ENCODE measurements at regions of chr15 and their contacts with region 1.

Region 1: GRCh38 chr15:40481341-40482074 is 10.7 kb downstream of the CHST14 start:
- DNase-seq: no peak
- H3K4me3 Mint-ChIP-seq: no peak overlapping the region
- H3K27ac Mint-ChIP-seq: no peak overlapping the region
- H3K4me1 Mint-ChIP-seq: no peaks in the 10 kb centered on the region
- H3K27me3 Mint-ChIP-seq: peaks cover 36% of the 10 kb centered on the region

Region 2: DNA sequence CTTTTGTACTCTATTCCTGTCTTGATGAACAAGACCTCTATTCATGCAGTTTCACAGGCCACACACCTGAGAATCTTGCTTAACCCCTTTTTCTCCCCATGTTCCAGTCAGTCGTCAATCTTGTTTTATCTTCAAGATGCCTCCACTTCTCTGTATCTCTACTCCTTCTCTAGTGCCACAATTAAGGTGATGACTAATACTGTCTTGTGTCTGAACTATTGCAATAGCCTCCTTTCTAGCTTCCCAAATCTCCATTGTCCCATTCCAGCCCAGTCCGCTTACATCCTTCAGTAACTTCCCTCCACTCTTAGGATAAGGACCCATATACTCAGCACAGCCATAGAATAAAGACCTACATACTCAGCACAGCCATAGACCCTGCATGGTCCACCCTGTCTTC is 14.0 kb after region 1 on chr15:
- intact Hi-C with region 1: loop called (anchors 1 kb)
- DNase-seq: no peak
- H3K4me3 Mint-ChIP-seq: no peak overlapping the region
- H3K27ac Mint-ChIP-seq: no peak overlapping the region
- H3K4me1 Mint-ChIP-seq: peaks cover 18% of the 10 kb centered on the region
- H3K27me3 Mint-ChIP-seq: peaks cover 18% of the 10 kb centered on the region